ENCODE measurements at regions of chr6 and their contacts with region 1.

Region 1: DNA sequence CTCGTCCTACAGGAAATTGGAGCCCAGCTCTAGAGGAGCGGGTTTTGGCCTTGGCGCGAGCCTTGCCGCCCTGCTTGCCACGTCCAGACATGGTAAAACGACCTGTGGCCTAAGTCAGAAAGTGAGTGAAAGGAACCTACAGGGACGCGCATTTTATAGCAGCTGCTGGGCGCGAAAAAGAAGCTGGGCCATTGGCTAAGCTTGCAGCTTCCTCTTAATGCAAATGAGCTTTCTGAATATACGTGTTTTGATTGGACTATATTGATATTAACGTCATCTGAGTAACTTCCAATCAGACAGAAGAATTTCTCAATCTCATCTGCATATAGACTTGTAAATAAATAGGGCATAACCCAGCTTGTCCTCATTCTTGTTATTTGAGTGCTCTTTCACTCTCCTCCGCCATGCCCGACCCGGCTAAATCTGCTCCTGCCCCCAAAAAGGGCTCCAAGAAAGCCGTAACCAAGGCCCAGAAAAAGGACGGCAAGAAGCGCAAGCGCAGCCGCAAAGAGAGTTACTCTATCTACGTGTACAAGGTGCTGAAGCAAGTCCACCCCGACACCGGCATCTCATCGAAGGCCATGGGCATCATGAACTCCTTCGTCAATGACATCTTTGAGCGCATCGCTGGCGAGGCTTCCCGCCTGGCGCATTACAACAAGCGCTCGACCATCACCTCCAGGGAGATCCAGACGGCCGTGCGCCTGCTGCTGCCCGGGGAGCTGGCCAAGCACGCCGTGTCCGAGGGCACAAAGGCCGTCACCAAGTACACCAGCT is 18.9 kb downstream of the OR2B2 start:
- DNase-seq: peak; percentile 95
- H3K4me3 ChIP-seq: peak overlapping the region; percentile 45 to 77 (median 63)
- H3K27ac ChIP-seq: peak overlapping the region; percentile 78 to 95 (median 94)
- H3K4me1 ChIP-seq: peaks cover 4 to 60% (median 35%) of the 10 kb centered on the region in 6 donors
- H3K27me3 ChIP-seq: peaks cover 0 to 9% (median 0%) of the 10 kb centered on the region in 7 donors
- CTCF ChIP-seq: peak in 1 of 11 experiments; percentile 23
- POLR2A ChIP-seq: peak; percentile 91 to 98 (median 97)

Region 2: DNA sequence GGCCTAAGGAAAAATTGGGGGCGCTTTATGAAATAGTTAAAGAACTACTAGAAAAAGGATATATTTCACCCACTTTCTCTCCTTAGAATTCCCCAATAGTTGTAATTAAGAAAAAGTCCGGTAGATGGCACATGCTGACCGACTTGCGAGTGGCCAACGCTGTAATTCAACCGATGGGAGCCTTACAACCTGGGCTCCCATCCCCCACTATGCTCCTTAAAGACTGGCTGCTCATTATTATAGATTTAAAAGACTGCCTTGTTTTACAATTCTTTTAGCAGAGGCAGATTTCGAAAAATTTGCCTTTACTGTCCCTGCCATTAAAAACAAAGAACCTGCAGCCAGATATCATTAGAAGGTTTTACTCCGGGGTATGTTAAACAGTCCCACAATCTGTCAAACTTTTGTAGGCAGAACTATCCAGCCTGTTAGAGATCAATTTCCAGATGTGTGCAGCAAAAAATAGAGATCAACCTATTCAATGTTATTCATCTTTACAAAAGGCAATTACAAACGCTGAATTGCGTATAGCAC is 704.3 kb before region 1 on chr6:
- intact Hi-C with region 1: loop called (anchors 10 kb)
- DNase-seq: no peak
- H3K4me3 ChIP-seq: peak overlapping the region; percentile 35 to 83 (median 54)
- H3K27ac ChIP-seq: peak overlapping the region in 7 of 8 donors; percentile 69 to 85 (median 79)
- H3K4me1 ChIP-seq: peaks cover 0 to 18% (median 11%) of the 10 kb centered on the region in 6 donors
- H3K27me3 ChIP-seq: no peaks in the 10 kb centered on the region
- CTCF ChIP-seq: peak; percentile 43 to 79 (median 68)
- POLR2A ChIP-seq: no peak

Region 3: GRCh38 chr6:27472617-27473400 is 420.4 kb before region 1 on chr6 and contains the start of gene ZNF184:
- intact Hi-C with region 1: loop called (anchors 10 kb)
- DNase-seq: peak; percentile 97
- H3K4me3 ChIP-seq: peak within 1 kb of the TSS; percentile 42 to 89 (median 72)
- H3K27ac ChIP-seq: peak within 1 kb of the TSS; percentile 74 to 96 (median 92)
- H3K4me1 ChIP-seq: peaks cover 17 to 63% (median 33%) of the 10 kb centered on the region in 6 donors
- H3K27me3 ChIP-seq: no peaks in the 10 kb centered on the region
- CTCF ChIP-seq: peak in 1 of 11 experiments; percentile 17
- POLR2A ChIP-seq: peak in 1 of 3 donors; percentile 54
- total RNA-seq, gene ZNF184: 6.6 to 11.2 (median 7.8) TPM

Region 4: DNA sequence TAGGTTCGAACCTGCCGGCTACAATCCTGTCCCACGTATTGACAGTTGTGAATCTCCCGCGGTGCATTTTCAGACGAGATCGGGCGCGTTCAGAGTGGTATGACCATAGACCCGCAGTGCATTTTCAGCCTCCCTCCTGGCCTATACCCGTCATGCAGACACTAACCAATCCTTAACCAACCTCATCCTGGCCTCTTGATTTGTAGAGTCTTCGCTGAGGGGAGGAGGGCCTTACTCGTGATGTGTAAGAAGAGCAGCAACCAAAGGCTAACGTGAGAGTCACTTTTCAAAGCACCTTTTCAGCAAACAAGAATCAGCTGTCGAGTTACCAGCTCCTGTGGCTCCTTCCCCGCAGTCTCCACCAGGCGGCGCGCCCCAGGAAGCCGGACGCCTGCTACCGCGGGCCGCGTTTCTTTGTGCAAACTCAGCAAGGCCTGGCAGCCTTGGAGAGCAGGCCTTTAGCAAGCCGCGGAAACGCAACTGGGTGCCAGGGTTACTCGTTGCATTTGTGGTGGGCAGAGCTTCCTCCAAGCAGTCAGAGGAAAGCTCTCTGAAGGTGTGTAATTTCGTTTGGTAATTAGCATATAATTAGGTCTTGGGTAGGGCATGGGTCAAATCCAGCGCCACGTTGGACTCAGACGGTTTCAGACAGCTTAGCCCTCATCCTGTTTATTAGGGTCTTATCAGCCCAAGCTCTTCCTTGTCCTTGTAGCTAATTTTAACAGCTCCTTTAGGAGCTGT is 120.8 kb before region 1 on chr6:
- intact Hi-C with region 1: loop called (anchors 10 kb)
- DNase-seq: peak; percentile 97
- H3K4me3 ChIP-seq: peak overlapping the region in 2 of 8 donors; percentile 1 to 4
- H3K27ac ChIP-seq: peak overlapping the region in 4 of 8 donors; percentile 34 to 54 (median 45)
- H3K4me1 ChIP-seq: peaks cover 0 to 26% (median 17%) of the 10 kb centered on the region in 6 donors
- H3K27me3 ChIP-seq: peaks cover 0 to 10% (median 0%) of the 10 kb centered on the region in 7 donors
- CTCF ChIP-seq: peak; percentile 78 to 96 (median 93)
- POLR2A ChIP-seq: no peak

Region 5: DNA sequence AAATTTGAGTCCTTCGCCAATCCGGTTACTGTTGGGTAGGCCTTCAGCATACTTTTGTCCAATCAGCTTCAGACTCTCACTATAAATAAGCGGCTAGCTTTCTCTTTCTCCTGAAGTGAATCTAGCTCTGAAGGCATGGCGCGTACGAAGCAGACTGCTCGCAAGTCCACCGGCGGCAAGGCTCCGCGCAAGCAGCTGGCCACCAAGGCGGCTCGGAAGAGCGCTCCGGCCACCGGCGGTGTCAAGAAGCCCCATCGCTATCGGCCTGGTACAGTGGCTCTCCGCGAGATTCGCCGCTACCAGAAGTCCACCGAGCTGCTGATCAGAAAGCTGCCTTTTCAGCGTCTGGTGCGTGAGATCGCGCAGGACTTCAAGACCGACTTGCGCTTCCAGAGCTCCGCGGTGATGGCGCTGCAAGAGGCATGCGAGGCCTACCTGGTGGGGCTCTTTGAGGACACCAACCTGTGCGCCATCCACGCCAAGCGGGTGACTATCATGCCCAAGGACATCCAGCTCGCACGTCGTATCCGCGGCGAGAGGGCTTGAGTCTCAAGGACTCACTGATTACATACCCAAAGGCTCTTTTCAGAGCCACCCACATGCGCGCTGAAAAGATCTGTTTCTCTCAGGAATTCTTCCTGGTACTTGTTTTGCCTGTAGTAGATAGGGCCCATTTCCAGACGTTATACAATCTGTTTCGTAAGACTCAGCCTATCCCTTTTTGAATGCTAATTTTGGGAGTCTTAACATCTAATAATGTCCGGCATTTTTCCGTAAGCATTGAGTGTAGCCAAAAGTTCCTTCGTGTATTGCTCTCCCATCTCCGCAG is 83.1 kb before region 1 on chr6:
- intact Hi-C with region 1: loop called (anchors 5 kb)
- DNase-seq: peak; percentile 93
- H3K4me3 ChIP-seq: peak overlapping the region; percentile 24 to 82 (median 51)
- H3K27ac ChIP-seq: peak overlapping the region; percentile 87 to 99 (median 98)
- H3K4me1 ChIP-seq: peaks cover 3 to 58% (median 46%) of the 10 kb centered on the region in 6 donors
- H3K27me3 ChIP-seq: peaks cover 0 to 9% (median 0%) of the 10 kb centered on the region in 7 donors
- CTCF ChIP-seq: no peak
- POLR2A ChIP-seq: peak; percentile 98 to 100 (median 99)

Region 6: GRCh38 chr6:27871924-27872638 is 21.2 kb before region 1 on chr6:
- intact Hi-C with region 1: loop called (anchors 2 kb)
- DNase-seq: peak; percentile 94
- H3K4me3 ChIP-seq: peak overlapping the region; percentile 40 to 72 (median 46)
- H3K27ac ChIP-seq: peak overlapping the region; percentile 94 to 97 (median 96)
- H3K4me1 ChIP-seq: peaks cover 5 to 42% (median 26%) of the 10 kb centered on the region in 6 donors
- H3K27me3 ChIP-seq: peaks cover 0 to 4% (median 0%) of the 10 kb centered on the region in 7 donors
- CTCF ChIP-seq: peak in 6 of 11 experiments; percentile 4 to 47 (median 20)
- POLR2A ChIP-seq: peak; percentile 95 to 98 (median 97)